Activated T-helper 2 cell treated with anti-CD3 and anti-CD28 coated beads, Interferon-gamma antibody, Interleukin-2, Interleukin-4, amounts not matched to agents 10 μg/mL and 5 μg/mL and 100 μg/mL, durations not matched to agents 14 hours and 24 hours and 36 hours (primary cell): ENCODE measurements at regions of chr1 and their contacts with region 1.

Region 1: DNA sequence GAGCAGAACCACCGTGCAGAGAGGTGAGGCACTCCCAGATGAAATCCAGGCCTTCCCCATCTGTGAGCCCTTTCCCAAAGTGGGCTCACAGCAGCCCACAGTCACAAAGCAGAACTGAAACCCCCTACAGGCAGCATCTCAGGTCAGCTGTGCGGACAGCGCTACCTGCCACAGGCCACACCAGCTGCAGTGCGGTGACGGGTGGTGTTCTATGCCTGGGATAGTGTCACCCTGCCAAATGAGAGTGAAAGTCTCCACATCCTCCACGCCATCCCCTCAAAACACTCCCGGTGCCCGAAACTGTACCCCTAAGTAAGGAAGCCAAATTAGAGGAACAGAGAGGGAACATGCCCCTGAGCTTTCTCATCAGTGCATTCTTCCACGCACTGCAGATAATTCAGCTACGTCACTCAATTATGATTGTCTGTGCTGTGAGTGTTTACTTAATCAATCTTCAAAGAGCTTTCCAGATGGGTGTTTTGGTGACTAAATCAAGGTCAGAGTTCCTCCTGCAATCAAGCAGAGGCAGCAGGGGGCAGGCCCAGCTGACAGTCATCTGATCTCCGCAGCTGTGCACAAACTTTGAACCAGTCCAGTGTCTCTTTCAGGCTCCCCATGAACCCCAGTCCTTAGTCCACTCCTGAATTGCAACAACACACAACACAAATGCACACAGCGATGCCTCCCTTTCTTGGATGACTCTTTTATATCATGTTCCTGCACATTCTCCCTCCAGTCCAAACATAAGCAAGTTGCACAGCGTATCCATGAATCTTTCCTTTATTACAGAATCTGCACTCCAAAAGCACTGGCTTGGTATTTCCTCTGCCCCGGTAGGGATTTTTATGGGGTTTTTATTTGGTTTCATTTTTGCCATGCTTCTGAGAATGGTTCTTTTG is 150.0 kb downstream of the TOMM20 start:
- DNase-seq: no peak
- H3K4me3 Mint-ChIP-seq: peak overlapping the region; percentile 91
- H3K27ac Mint-ChIP-seq: peak overlapping the region; percentile 97
- H3K4me1 Mint-ChIP-seq: peaks cover 82% of the 10 kb centered on the region
- H3K27me3 Mint-ChIP-seq: no peaks in the 10 kb centered on the region

Region 2: GRCh38 chr1:234722904-234723720 is 255.5 kb before region 1 on chr1:
- intact Hi-C with region 1: loop called (anchors 1 kb)
- DNase-seq: peak; percentile 26
- H3K4me3 Mint-ChIP-seq: peak overlapping the region; percentile 72
- H3K27ac Mint-ChIP-seq: peak overlapping the region; percentile 99
- H3K4me1 Mint-ChIP-seq: peaks cover 73% of the 10 kb centered on the region
- H3K27me3 Mint-ChIP-seq: no peaks in the 10 kb centered on the region

Region 3: GRCh38 chr1:234875953-234876855 is 102.4 kb before region 1 on chr1:
- intact Hi-C with region 1: loop called (anchors 1 kb)
- DNase-seq: no peak
- H3K4me3 Mint-ChIP-seq: no peak overlapping the region
- H3K27ac Mint-ChIP-seq: peak overlapping the region; percentile 88
- H3K4me1 Mint-ChIP-seq: peaks cover 63% of the 10 kb centered on the region
- H3K27me3 Mint-ChIP-seq: no peaks in the 10 kb centered on the region

Region 4: DNA sequence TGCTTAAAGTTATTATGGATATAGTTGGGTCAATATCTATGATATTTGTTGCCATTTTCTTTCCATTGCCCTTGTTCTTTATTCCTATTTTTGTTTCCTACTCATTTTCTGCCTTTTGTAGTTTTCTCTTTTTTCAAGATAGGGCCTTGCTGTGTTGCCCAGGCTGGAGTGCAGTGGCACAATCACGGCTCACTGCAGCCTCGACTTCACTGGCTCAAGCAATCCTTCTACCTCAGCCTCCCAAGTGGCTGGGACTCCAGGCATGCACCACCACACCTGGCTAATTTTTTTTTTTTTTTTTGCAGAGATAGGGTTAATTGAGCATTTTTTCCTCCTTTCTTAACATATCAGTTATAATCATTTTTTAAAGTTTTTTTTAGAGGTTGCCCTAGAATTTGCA is 57.3 kb after region 1 on chr1:
- intact Hi-C with region 1: no loop called
- DNase-seq: no peak
- H3K4me3 Mint-ChIP-seq: no peak overlapping the region
- H3K27ac Mint-ChIP-seq: no peak overlapping the region
- H3K4me1 Mint-ChIP-seq: peaks cover 13% of the 10 kb centered on the region
- H3K27me3 Mint-ChIP-seq: no peaks in the 10 kb centered on the region

Region 5: GRCh38 chr1:235050911-235051360 is 72.3 kb after region 1 on chr1:
- intact Hi-C with region 1: loop called (anchors 2 kb)
- DNase-seq: no peak
- H3K4me3 Mint-ChIP-seq: no peak overlapping the region
- H3K27ac Mint-ChIP-seq: peak overlapping the region; percentile 88
- H3K4me1 Mint-ChIP-seq: peaks cover 50% of the 10 kb centered on the region
- H3K27me3 Mint-ChIP-seq: no peaks in the 10 kb centered on the region